BJ (cell line): ENCODE measurements at regions of chr12 and their contacts with region 1.

Region 1: DNA sequence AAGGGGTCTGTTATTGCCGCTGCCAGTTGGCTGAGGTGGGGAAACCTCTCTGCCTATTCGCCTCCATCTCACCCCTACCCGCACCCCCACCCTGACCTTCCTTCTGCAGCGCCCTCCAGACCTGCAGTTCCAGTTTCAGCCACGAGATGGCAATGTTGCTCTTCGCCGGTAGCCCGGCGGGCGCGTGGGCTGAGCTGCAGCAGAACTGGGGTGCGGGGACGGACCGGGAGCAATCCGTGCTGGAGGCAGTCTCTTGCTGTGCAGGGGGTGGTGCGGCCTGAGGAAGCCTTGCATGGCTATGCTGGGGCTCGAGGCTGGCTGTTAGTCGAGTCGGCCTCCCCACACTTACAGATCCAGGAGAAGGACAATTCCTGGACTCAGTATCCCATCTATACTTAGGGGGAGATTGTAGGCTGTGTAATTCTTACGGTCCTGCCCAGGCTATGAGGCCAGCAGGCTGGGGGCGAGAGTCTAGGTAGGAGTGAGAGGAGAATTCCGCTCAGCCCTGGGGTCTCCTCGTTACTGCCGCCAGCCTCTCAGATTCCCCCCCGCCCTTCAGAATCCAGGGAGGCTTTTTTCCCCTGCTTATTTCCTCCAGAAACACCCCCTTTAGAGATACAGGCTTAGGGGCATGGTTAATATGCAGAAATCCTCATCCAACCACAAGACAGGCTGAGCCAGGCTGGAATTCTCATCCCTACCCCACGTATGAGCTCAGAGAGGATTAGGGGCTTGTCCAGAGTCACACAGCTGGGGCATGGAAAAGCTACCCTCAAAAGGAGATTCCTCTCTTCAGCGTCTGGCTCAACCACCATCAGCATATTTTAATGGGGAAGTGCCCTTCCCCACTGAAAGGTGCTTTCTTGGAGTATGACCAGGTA is 118.2 kb downstream of the AACS start:
- DNase-seq: no peak
- H3K4me3 ChIP-seq: no peak overlapping the region
- H3K27me3 ChIP-seq: peaks cover 7% of the 10 kb centered on the region
- CTCF ChIP-seq: peak; percentile 100

Region 2: DNA sequence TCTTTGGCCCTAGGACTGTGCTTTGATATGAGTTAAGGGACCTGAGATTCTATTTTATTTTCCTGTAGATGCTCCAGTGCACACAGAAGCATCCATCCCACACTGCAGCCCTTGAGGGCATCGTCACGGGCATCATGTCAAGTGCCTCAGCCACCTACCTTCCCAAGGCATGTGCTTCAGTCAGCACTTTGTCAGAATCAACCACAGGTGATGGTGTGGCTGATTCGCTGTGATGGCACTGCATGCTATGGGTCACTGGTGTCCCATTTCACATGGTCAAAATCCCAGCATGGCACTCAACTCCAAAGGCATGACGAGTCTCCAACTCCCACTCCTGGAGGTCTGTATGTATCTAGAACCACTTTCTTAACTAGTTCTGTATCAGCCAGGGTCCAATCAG is 17.4 kb before region 1 on chr12:
- CTCF ChIA-PET with region 1: interaction called, 18 read pairs
- POLR2A ChIA-PET with region 1: no interaction called
- DNase-seq: no peak
- H3K4me3 ChIP-seq: no peak overlapping the region
- H3K27me3 ChIP-seq: no peaks in the 10 kb centered on the region; the same call in 1 of the 2 replicates
- CTCF ChIP-seq: no peak

Region 3: GRCh38 chr12:125402874-125403789 is 219.7 kb after region 1 on chr12:
- CTCF ChIA-PET with region 1: interaction called, 11 read pairs
- POLR2A ChIA-PET with region 1: no interaction called
- DNase-seq: no peak
- H3K4me3 ChIP-seq: no peak overlapping the region
- H3K27me3 ChIP-seq: no peaks in the 10 kb centered on the region
- CTCF ChIP-seq: peak; percentile 36